ENCODE measurements at regions of chr20 and their contacts with region 1.

Region 1: DNA sequence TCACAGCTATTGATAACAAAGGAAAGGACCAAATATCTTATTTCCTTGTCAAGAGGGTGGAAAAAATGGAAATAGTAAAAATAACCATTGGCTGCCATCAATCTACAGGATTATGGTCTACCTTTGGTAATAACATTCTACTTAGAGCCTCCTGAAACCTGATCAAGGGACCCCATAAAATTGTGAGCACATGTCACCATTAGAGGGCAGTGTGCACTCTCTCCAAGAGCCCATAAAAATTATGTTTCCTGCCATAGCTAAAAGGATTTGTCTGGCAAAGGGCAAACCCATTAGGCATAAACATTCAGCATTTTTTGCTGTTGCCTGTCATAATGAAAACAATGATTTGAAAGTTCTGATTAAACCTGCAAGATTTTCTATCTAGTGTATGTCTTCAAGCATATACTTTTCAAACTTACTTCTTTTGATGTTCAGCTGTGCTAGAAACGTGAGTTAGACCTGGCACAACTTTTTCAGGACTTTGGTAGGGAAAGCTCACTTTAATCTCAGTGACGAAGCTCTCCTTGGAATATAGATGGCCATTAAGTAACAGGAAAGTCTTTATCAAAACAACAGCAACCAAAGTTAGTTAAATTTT is 120.7 kb upstream of the ZFP64 start:
- DNase-seq: peak; percentile 70
- H3K4me3 Mint-ChIP-seq: no peak overlapping the region
- H3K27ac Mint-ChIP-seq: no peak overlapping the region
- H3K4me1 Mint-ChIP-seq: peaks cover 19% of the 10 kb centered on the region
- H3K27me3 Mint-ChIP-seq: peaks cover 4% of the 10 kb centered on the region

Region 2: GRCh38 chr20:52379723-52380336 is 67.6 kb after region 1 on chr20:
- CTCF ChIA-PET with region 1: interaction called, 11 read pairs
- DNase-seq: peak; percentile 39
- H3K4me3 Mint-ChIP-seq: no peak overlapping the region
- H3K27ac Mint-ChIP-seq: no peak overlapping the region
- H3K4me1 Mint-ChIP-seq: no peaks in the 10 kb centered on the region
- H3K27me3 Mint-ChIP-seq: no peaks in the 10 kb centered on the region

Region 3: DNA sequence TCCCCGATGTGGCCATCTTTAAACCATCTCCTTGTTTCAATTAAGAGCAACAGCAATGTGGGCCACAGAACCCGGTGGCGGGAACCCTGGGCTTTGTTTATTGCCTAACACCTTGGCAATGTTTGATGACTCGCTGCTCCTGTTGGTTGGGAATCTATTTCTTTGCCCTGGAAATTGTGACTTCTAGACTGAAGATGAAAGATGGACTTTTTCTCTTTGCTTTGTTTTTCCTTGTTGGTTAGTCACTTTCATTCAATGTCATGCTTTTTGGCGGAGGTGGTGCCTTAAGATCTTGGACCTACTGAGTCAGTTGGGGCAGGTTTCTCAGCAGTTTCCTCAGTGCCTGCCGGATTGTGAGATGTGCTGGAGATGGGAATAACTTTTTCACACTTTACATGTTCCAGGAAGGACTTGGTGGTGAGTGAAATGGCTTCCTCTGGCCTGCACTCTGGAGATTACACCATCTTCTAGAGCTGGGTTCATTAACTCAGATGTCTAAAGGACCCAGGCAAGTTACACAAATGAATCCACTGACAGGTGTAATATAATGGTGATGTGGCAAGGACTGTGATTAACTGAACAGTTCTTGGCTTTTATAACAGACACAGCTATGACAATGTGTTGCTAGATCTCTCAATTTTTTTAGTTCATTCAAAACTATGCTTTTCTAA is 716.2 kb after region 1 on chr20:
- CTCF ChIA-PET with region 1: interaction called, 12 read pairs
- DNase-seq: no peak
- H3K4me3 Mint-ChIP-seq: no peak overlapping the region
- H3K27ac Mint-ChIP-seq: no peak overlapping the region
- H3K4me1 Mint-ChIP-seq: peaks cover 49% of the 10 kb centered on the region
- H3K27me3 Mint-ChIP-seq: no peaks in the 10 kb centered on the region

Region 4: GRCh38 chr20:53216856-53217576 is 904.8 kb after region 1 on chr20:
- CTCF ChIA-PET with region 1: interaction called, 13 read pairs
- DNase-seq: peak; percentile 87
- H3K4me3 Mint-ChIP-seq: peak overlapping the region; percentile 14
- H3K27ac Mint-ChIP-seq: peak overlapping the region; percentile 47
- H3K4me1 Mint-ChIP-seq: peaks cover 36% of the 10 kb centered on the region
- H3K27me3 Mint-ChIP-seq: no peaks in the 10 kb centered on the region